ENCODE measurements at regions of chr5 and their contacts with region 1.

Region 1: GRCh38 chr5:169350759-169351240 is 49.9 kb upstream of the SLIT3 start:
- DNase-seq: peak; percentile 99
- H3K4me3 ChIP-seq: no peak overlapping the region
- H3K27ac ChIP-seq: peak overlapping the region; percentile 82
- H3K4me1 ChIP-seq: peaks cover 54% of the 10 kb centered on the region
- H3K27me3 ChIP-seq: no peaks in the 10 kb centered on the region
- CTCF ChIP-seq: peak in 1 of 2 donors; percentile 10

Region 2: GRCh38 chr5:168513861-168514428 is 836.9 kb before region 1 on chr5:
- CTCF ChIA-PET with region 1: no interaction called
- dilution Hi-C with region 1: no loop called
- in situ Hi-C with region 1: no loop called
- intact Hi-C with region 1: no loop called
- DNase-seq: no peak
- H3K4me3 ChIP-seq: no peak overlapping the region
- H3K27ac ChIP-seq: no peak overlapping the region
- H3K4me1 ChIP-seq: no peaks in the 10 kb centered on the region
- H3K27me3 ChIP-seq: no peaks in the 10 kb centered on the region
- CTCF ChIP-seq: no peak

Region 3: DNA sequence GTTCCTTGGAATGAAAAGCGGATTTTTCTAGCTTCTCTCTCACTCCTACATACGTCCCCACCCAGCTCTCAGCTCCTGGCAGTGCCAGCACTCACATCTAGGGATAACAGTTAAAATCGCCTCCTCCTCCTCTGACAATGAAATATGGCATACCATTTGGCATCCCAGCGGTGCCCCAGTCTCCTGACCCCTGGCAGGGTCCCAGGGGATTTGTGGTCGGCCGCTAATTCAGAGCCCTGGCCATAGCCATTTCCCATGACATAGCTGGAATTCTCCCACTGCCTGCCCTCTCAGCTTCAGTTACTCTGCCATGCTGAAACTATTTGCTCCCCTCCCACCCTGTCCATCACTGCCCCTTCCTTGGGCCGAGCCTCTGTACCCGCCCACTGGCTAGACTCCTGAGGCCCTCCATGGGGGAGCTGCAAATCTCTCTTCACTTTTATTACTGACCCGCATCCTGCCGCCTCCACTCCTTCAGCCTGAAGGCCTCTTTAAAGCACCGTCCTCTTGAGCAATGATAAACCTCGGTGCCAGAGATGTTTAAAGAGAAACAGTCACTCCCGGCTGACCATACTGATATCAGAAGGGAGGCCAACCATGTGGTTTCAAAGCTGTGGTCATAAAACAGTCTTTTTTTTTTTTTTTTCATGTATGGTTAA is 189.6 kb before region 1 on chr5:
- CTCF ChIA-PET with region 1: no interaction called
- dilution Hi-C with region 1: no loop called
- in situ Hi-C with region 1: no loop called
- intact Hi-C with region 1: loop called (anchors 5 kb)
- DNase-seq: peak; percentile 79
- H3K4me3 ChIP-seq: no peak overlapping the region
- H3K27ac ChIP-seq: peak overlapping the region; percentile 86
- H3K4me1 ChIP-seq: peaks cover 67% of the 10 kb centered on the region
- H3K27me3 ChIP-seq: no peaks in the 10 kb centered on the region
- CTCF ChIP-seq: no peak

Region 4: DNA sequence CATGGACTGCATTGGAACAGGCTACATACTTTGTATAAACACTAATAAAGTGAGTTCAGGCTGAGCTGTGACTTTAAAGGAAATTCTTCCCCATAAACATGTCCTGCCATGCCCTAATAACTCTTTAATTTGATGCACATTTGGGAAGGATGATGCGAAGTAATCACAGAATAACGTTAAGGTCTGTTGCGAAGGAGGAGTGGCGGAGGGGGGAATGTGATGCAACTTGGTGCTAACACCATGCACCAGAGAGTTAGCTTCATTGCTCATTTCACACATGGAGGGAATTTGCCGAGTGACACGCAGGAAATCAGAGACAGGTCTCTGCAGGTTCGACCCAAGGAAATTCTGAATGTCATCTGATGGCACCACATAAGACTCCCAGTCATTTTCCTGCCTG is 82.8 kb before region 1 on chr5:
- CTCF ChIA-PET with region 1: no interaction called
- dilution Hi-C with region 1: no loop called
- in situ Hi-C with region 1: no loop called
- intact Hi-C with region 1: loop called (anchors 1 kb)
- DNase-seq: peak; percentile 55
- H3K4me3 ChIP-seq: no peak overlapping the region
- H3K27ac ChIP-seq: no peak overlapping the region
- H3K4me1 ChIP-seq: peaks cover 12% of the 10 kb centered on the region
- H3K27me3 ChIP-seq: no peaks in the 10 kb centered on the region
- CTCF ChIP-seq: no peak

Region 5: DNA sequence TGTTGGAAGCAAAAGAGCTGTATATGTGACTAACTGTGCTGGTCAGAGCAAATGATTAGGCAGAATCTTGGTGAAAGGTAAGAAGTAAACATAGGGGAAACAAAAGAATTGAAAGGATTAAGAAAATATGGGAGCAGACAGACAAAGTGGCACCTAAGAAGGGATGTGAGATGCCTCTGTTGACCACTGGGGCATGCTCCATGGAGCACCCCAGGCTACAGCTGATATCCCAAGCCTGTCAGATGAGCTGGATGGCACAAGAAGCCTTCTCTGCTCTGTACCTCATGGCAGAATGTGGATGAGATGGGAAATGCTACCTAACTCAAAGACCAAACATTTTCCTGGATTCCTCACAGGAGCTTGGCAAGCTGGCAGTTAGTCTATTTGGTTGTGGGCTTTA is 39.5 kb after region 1 on chr5:
- CTCF ChIA-PET with region 1: no interaction called
- dilution Hi-C with region 1: no loop called
- in situ Hi-C with region 1: no loop called
- intact Hi-C with region 1: loop called (anchors 5 kb)
- DNase-seq: no peak
- H3K4me3 ChIP-seq: no peak overlapping the region
- H3K27ac ChIP-seq: no peak overlapping the region
- H3K4me1 ChIP-seq: peaks cover 9% of the 10 kb centered on the region
- H3K27me3 ChIP-seq: no peaks in the 10 kb centered on the region
- CTCF ChIP-seq: peak in 1 of 2 donors; percentile 19

Region 6: DNA sequence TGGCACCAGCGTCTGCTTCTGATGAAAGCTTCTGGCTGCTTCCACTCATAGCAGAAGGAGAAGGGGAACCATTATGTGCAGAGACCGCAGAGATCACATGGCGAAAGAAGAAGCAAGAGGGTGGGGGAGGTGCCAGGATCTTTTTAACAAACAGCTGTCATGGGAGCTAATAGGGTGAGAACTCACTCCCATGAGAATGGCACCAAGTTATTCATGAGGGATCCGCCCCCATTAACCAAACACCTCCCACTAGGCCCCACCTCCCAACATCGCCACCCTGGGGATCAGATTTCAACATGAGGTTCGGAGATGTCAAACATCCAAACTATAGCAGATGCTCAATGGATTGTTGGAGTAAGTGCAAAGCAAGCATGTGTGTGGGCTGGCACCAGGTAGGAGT is 76.0 kb after region 1 on chr5:
- CTCF ChIA-PET with region 1: no interaction called
- dilution Hi-C with region 1: no loop called
- in situ Hi-C with region 1: no loop called
- intact Hi-C with region 1: loop called (anchors 5 kb)
- DNase-seq: no peak
- H3K4me3 ChIP-seq: no peak overlapping the region
- H3K27ac ChIP-seq: no peak overlapping the region
- H3K4me1 ChIP-seq: peaks cover 14% of the 10 kb centered on the region
- H3K27me3 ChIP-seq: no peaks in the 10 kb centered on the region
- CTCF ChIP-seq: no peak

Region 7: GRCh38 chr5:169467041-169467771 is 116.4 kb after region 1 on chr5:
- CTCF ChIA-PET with region 1: no interaction called
- dilution Hi-C with region 1: no loop called
- in situ Hi-C with region 1: no loop called
- intact Hi-C with region 1: no loop called
- DNase-seq: no peak
- H3K4me3 ChIP-seq: no peak overlapping the region
- H3K27ac ChIP-seq: no peak overlapping the region
- H3K4me1 ChIP-seq: no peaks in the 10 kb centered on the region
- H3K27me3 ChIP-seq: no peaks in the 10 kb centered on the region
- CTCF ChIP-seq: no peak